ENCODE measurements at regions of chr9 and their contacts with region 1.

Region 1: DNA sequence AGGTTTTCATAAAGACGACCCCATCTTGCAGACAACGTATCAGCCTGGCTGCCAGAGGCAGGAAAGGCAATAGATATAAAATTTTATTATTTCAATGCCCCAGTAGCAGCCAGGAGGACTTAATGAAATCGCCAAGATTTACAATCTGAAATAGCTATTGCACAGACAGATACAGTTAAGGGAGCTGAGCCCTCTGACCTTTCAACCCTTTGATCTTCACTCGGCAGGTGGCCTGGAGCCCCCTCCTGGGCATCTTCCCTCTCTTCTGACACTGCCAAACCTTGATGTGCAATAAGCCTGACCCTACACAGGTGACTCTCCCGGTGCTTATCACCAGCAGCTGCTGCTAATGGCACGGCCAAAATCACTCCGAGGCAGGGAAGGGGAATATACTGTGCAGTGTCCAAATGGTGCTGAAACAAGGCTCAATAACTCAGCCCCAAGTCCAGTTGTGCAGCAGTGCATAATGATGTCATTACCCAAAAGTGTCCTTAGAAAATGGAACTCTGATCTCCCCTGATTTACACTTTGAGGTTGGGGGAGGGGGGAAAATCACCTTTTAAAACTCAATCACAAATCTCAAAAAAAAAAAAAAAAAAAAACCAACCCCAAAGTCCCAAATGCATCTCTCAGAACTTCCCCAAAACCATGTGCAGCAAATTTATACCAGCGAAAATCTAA is 242.0 kb downstream of the CRB2 start:
- DNase-seq: no peak
- H3K4me3 ChIP-seq: no peak overlapping the region
- H3K27ac ChIP-seq: no peak overlapping the region
- H3K4me1 ChIP-seq: no peaks in the 10 kb centered on the region
- H3K27me3 ChIP-seq: no peaks in the 10 kb centered on the region
- CTCF ChIP-seq: no peak

Region 2: GRCh38 chr9:123470121-123470782 is 127.8 kb before region 1 on chr9:
- CTCF ChIA-PET with region 1: no interaction called
- POLR2A ChIA-PET with region 1: interaction called, 13 read pairs
- intact Hi-C with region 1: no loop called
- DNase-seq: no peak
- H3K4me3 ChIP-seq: no peak overlapping the region
- H3K27ac ChIP-seq: no peak overlapping the region
- H3K4me1 ChIP-seq: peaks cover 12% of the 10 kb centered on the region
- H3K27me3 ChIP-seq: no peaks in the 10 kb centered on the region
- CTCF ChIP-seq: no peak

Region 3: DNA sequence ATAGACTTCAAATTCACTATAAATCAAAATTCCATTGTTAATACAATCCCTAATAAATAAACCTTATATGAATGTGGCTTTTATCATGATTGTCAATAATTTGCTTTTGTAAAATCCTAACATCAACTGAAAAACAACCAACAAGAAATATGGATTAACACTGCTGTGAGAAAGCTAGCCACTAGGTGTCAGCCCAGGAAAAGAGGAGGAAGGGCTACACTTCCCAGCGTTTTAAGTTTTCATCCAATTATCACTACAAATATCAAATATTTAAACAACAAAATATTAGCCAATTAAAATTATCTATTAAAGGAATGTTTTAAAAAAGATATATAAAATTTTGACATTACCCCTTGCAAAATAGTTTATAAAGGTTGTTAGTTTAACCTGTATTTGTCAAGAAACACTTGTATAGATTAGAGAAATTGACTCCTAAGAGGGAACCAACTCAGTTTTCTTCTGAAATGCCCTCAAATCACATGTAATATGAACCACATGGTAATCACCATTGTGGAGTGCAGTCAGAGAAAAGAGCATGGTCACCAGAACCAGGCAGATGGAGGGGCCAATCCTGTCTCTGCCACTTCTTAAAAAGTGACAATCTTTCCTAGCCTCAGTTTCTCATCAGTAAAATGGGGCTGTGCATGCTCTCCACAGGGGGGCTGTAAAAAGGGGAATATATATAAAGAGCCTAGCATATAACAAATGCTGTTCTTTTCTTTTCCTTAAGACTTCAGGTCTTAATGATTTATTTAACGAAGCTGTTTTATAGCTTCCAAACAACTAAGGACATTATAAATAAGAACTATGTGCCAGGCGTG is 53.8 kb before region 1 on chr9:
- CTCF ChIA-PET with region 1: no interaction called
- POLR2A ChIA-PET with region 1: no interaction called
- intact Hi-C with region 1: no loop called
- DNase-seq: peak in 1 of 2 experiments; percentile 15
- H3K4me3 ChIP-seq: no peak overlapping the region
- H3K27ac ChIP-seq: no peak overlapping the region
- H3K4me1 ChIP-seq: no peaks in the 10 kb centered on the region
- H3K27me3 ChIP-seq: no peaks in the 10 kb centered on the region
- CTCF ChIP-seq: peak; percentile 89

Region 4: GRCh38 chr9:123658792-123659191 is 60.8 kb after region 1 on chr9:
- CTCF ChIA-PET with region 1: no interaction called
- POLR2A ChIA-PET with region 1: no interaction called
- intact Hi-C with region 1: no loop called
- DNase-seq: no peak
- H3K4me3 ChIP-seq: no peak overlapping the region
- H3K27ac ChIP-seq: no peak overlapping the region
- H3K4me1 ChIP-seq: no peaks in the 10 kb centered on the region
- H3K27me3 ChIP-seq: no peaks in the 10 kb centered on the region
- CTCF ChIP-seq: no peak

Region 5: GRCh38 chr9:124022201-124023121 is 424.4 kb after region 1 on chr9:
- CTCF ChIA-PET with region 1: no interaction called
- POLR2A ChIA-PET with region 1: no interaction called
- intact Hi-C with region 1: no loop called
- DNase-seq: no peak
- H3K4me3 ChIP-seq: no peak overlapping the region
- H3K27ac ChIP-seq: no peak overlapping the region
- H3K4me1 ChIP-seq: no peaks in the 10 kb centered on the region
- H3K27me3 ChIP-seq: peaks cover 69% of the 10 kb centered on the region
- CTCF ChIP-seq: no peak